Common myeloid progenitor, CD34-positive (primary cell): ENCODE measurements at regions of chr9 and their contacts with region 1.

Region 1: GRCh38 chr9:96388144-96388543 is 4.6 kb upstream of the SLC35D2 start:
- DNase-seq: no peak
- H3K4me3 ChIP-seq: no peak overlapping the region
- H3K27ac ChIP-seq: no peak overlapping the region
- H3K4me1 ChIP-seq: peaks cover 0 to 8% (median 3%) of the 10 kb centered on the region in 4 experiments
- H3K27me3 ChIP-seq: no peaks in the 10 kb centered on the region

Region 2: GRCh38 chr9:96398582-96399324 is 10.6 kb after region 1 on chr9:
- CTCF ChIA-PET with region 1: interaction called, 10 read pairs
- POLR2A ChIA-PET with region 1: no interaction called
- DNase-seq: peak in 2 of 3 donors; percentile 33 to 53
- H3K4me3 ChIP-seq: peak overlapping the region in 3 of 7 experiments; percentile 29 to 60 (median 55)
- H3K27ac ChIP-seq: peak overlapping the region; percentile 23 to 71
- H3K4me1 ChIP-seq: peaks cover 5 to 16% (median 11%) of the 10 kb centered on the region in 4 experiments
- H3K27me3 ChIP-seq: no peaks in the 10 kb centered on the region